ENCODE measurements at regions of chr17 and their contacts with region 1.

Region 1: DNA sequence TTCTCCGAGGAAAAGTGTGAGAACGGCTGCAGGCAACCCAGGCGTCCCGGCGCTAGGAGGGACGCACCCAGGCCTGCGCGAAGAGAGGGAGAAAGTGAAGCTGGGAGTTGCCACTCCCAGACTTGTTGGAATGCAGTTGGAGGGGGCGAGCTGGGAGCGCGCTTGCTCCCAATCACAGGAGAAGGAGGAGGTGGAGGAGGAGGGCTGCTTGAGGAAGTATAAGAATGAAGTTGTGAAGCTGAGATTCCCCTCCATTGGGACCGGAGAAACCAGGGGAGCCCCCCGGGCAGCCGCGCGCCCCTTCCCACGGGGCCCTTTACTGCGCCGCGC is at the start of gene ERBB2:
- DNase-seq: peak; percentile 73
- ATAC-seq: peak; percentile 43
- H3K4me3 Mint-ChIP-seq: peak within 1 kb of the TSS; percentile 95
- H3K27ac Mint-ChIP-seq: peak within 1 kb of the TSS; percentile 96
- H3K4me1 Mint-ChIP-seq: peaks cover 73% of the 10 kb centered on the region
- H3K27me3 Mint-ChIP-seq: no peaks in the 10 kb centered on the region
- CTCF ChIP-seq: no peak
- total RNA-seq, gene ERBB2: 153 to 209 TPM (median 158 TPM) in 3 replicates

Region 2: DNA sequence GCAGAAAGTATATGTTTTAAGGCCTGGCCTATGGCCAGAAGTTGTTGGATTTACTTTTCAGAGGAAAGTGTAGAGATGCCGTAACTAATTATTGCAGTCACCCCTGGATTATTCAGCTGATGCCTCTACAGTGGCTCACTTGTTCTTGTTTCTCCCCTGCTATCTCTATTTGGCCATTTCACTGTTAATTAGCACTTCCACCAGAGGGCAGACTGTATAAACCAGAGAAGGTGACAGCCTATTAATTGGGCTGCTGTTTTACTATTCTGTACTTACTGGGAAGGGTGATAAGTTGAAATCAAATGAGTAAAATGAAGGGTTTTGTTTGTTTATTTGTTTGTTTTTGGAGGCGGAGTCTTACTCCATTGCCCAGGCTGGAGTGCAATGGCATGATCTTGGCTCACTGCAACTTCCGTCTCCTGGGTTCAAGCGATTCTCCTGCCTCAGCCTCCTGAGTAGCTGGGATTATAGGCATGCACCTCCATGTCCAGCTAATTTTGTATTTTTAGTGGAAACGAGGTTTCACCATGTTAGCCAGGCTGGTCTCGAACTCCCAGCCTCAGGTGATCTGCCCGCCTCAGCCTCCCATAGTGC is 172.5 kb before region 1 on chr17:
- CTCF ChIA-PET with region 1: no interaction called
- POLR2A ChIA-PET with region 1: no interaction called
- DNase-seq: no peak
- ATAC-seq: peak; percentile 67
- H3K4me3 Mint-ChIP-seq: no peak overlapping the region
- H3K27ac Mint-ChIP-seq: no peak overlapping the region
- H3K4me1 Mint-ChIP-seq: no peaks in the 10 kb centered on the region
- H3K27me3 Mint-ChIP-seq: no peaks in the 10 kb centered on the region
- CTCF ChIP-seq: 0 out of 2 replicates have a peak, but pooled peaks have one; percentile 30

Region 3: DNA sequence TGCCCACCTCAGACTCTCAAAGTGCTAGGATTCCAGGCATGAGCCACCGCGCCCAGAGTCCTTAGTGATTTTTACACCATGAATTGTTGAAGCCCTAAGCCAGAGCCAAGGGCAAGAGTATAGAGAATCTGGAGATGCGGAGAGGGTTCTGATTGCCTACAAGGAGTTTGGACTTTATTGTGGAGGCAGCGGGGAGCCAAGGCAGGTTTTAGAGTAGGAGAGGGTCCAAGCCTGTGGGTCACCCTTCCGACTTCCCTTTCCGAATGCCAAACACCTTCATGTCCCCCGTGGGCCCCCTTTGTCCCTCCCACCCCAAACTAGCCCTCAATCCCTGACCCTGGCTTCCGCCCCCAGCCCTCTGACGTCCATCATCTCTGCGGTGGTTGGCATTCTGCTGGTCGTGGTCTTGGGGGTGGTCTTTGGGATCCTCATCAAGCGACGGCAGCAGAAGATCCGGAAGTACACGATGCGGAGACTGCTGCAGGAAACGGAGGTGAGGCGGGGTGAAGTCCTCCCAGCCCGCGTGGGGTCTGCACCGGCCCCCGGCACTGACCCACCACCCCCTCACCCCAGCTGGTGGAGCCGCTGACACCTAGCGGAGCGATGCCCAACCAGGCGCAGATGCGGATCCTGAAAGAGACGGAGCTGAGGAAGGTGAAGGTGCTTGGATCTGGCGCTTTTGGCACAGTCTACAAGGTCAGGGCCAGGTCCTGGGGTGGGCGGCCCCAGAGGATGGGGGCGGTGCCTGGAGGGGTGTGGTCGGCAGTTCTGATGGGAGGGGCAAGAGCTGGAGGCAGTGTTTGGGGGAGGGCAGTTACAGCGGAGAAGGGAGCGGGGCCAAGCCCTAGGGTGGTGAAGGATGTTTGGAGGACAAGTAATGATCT is 23.4 kb after region 1 on chr17:
- CTCF ChIA-PET with region 1: interaction called, 77 read pairs
- POLR2A ChIA-PET with region 1: no interaction called
- DNase-seq: peak; percentile 76
- ATAC-seq: peak; percentile 96
- H3K4me3 Mint-ChIP-seq: no peak overlapping the region
- H3K27ac Mint-ChIP-seq: peak overlapping the region; percentile 53; the same call in 1 of the 2 replicates
- H3K4me1 Mint-ChIP-seq: peaks cover 8% of the 10 kb centered on the region
- H3K27me3 Mint-ChIP-seq: no peaks in the 10 kb centered on the region
- CTCF ChIP-seq: no peak

Region 4: GRCh38 chr17:39763046-39763820 is 63.5 kb after region 1 on chr17:
- CTCF ChIA-PET with region 1: no interaction called
- POLR2A ChIA-PET with region 1: no interaction called
- DNase-seq: no peak
- ATAC-seq: no peak
- H3K4me3 Mint-ChIP-seq: no peak overlapping the region
- H3K27ac Mint-ChIP-seq: no peak overlapping the region
- H3K4me1 Mint-ChIP-seq: no peaks in the 10 kb centered on the region
- H3K27me3 Mint-ChIP-seq: no peaks in the 10 kb centered on the region; the same call in 1 of the 2 replicates
- CTCF ChIP-seq: no peak

Region 5: DNA sequence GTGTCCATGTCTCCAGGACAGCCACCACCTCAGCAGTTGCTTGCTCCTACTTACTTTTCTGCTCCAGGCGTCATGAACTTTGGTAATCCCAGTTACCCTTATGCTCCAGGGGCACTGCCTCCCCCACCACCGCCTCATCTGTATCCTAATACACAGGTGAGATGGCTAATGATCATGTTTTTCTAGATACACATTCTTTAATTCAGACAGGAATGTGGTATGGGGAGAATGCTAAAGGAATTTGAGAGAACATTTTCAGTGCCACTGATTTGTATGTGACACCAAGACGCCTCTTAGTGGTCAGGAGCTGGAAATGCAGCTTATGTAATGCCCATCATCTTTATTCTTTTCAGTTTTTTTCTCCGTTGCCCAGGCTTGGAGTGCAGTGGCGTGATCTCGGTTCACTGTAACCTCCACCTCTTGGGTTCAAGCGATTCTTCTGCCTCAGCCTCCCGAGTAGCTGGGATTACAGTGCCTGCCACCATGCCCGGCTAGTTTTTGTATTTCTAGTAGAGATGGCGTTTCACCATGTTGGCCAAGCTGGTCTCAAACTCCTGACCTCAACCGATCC is 468.6 kb after region 1 on chr17:
- CTCF ChIA-PET with region 1: no interaction called
- POLR2A ChIA-PET with region 1: no interaction called
- DNase-seq: no peak
- ATAC-seq: peak; percentile 84
- H3K4me3 Mint-ChIP-seq: no peak overlapping the region
- H3K27ac Mint-ChIP-seq: peak overlapping the region; percentile 98
- H3K4me1 Mint-ChIP-seq: peaks cover 5% of the 10 kb centered on the region
- H3K27me3 Mint-ChIP-seq: no peaks in the 10 kb centered on the region; the same call in 1 of the 2 replicates
- CTCF ChIP-seq: no peak; the same call in 1 of the 2 replicates